Activated naive CD4-positive, alpha-beta T cell treated with anti-CD3 and anti-CD28 coated beads for 36 hours (primary cell): ENCODE measurements at regions of chr5 and their contacts with region 1.

Region 1: GRCh38 chr5:60699530-60700382 is at the start of gene DEPDC1B:
- DNase-seq: peak; percentile 90
- H3K4me3 Mint-ChIP-seq: peak within 1 kb of the TSS; percentile 88
- H3K27ac Mint-ChIP-seq: peak within 1 kb of the TSS; percentile 81
- H3K4me1 Mint-ChIP-seq: peaks cover 12% of the 10 kb centered on the region
- H3K27me3 Mint-ChIP-seq: peaks cover 5% of the 10 kb centered on the region
- total RNA-seq, gene DEPDC1B: 35.0 to 35.8 TPM

Region 2: GRCh38 chr5:60687927-60688720 is 11.6 kb before region 1 on chr5:
- CTCF ChIA-PET with region 1: interaction called, 5 read pairs
- intact Hi-C with region 1: loop called (anchors 1 kb)
- DNase-seq: no peak
- H3K4me3 Mint-ChIP-seq: no peak overlapping the region
- H3K27ac Mint-ChIP-seq: no peak overlapping the region
- H3K4me1 Mint-ChIP-seq: no peaks in the 10 kb centered on the region
- H3K27me3 Mint-ChIP-seq: no peaks in the 10 kb centered on the region

Region 3: DNA sequence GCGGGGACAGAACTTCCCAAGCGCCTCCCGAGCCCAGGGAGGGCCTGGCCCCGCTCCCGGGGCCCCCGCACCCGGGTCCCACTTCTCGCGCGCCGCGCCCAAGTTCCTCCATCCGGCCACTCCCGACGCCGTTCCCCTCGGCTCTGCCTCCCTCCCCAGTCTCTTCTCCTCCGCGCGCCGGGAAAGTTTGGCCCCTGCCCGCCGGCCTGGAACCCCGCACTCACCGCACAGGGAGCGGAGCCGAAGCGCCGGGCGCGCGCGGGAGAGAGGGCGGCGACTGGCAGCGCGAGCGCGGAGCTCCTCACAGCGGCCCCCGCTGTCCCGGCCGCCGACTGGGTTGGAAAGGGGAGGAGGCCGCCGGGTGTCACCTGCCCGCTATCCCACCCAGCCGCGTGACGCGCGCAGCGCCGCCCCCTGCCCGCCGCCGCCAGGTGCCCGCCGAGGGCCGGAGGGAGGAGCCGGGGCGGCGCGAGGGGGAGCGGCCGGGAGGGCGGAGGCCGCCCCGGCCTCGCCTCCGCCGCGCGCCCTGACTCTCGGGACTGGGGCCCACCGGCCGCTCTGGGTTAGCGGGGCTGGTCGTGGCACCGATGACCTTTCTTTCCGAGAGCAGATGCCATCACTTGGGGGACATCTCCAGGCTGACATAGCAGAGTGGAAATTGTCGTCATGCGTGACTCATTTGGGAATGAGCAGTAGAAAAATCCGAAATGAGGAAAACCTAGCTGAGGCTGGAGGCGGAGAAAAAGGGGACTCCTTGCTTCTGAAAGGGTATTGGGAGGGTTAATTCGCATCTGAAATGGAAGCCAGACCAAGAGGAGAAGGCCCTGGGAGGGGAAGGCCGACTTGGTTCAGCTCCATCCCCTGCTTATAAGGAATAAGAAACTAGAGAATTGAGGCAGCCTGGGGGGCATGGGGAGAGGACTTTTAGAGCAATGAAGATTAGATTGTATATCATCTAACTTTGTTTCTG is 144.5 kb after region 1 on chr5 and contains the start of gene ELOVL7:
- CTCF ChIA-PET with region 1: no interaction called
- intact Hi-C with region 1: loop called (anchors 2 kb)
- DNase-seq: peak; percentile 68
- H3K4me3 Mint-ChIP-seq: peak within 1 kb of the TSS; percentile 79
- H3K27ac Mint-ChIP-seq: no peak within 1 kb of the TSS
- H3K4me1 Mint-ChIP-seq: peaks cover 8% of the 10 kb centered on the region
- H3K27me3 Mint-ChIP-seq: peaks cover 43% of the 10 kb centered on the region
- total RNA-seq, gene ELOVL7: 0.30 to 0.31 TPM

Region 4: GRCh38 chr5:61082516-61083280 is 382.9 kb after region 1 on chr5:
- CTCF ChIA-PET with region 1: no interaction called
- intact Hi-C with region 1: no loop called
- DNase-seq: no peak
- H3K4me3 Mint-ChIP-seq: no peak overlapping the region
- H3K27ac Mint-ChIP-seq: no peak overlapping the region
- H3K4me1 Mint-ChIP-seq: no peaks in the 10 kb centered on the region
- H3K27me3 Mint-ChIP-seq: no peaks in the 10 kb centered on the region

Region 5: GRCh38 chr5:61162010-61162831 is 462.5 kb after region 1 on chr5 and contains the start of gene SMIM15:
- CTCF ChIA-PET with region 1: no interaction called
- intact Hi-C with region 1: loop called (anchors 5 kb)
- DNase-seq: peak; percentile 90
- H3K4me3 Mint-ChIP-seq: peak within 1 kb of the TSS; percentile 97
- H3K27ac Mint-ChIP-seq: peak within 1 kb of the TSS; percentile 95
- H3K4me1 Mint-ChIP-seq: peaks cover 38% of the 10 kb centered on the region
- H3K27me3 Mint-ChIP-seq: no peaks in the 10 kb centered on the region
- total RNA-seq, gene SMIM15: 45.8 to 48.1 TPM